ENCODE measurements at regions of chr2 and their contacts with region 1.

Region 1: GRCh38 chr2:185608799-185609198 is 129.8 kb upstream of the FSIP2 start:
- DNase-seq: no peak
- ATAC-seq: no peak
- H3K4me3 ChIP-seq: no peak overlapping the region
- H3K27ac ChIP-seq: no peak overlapping the region
- H3K4me1 ChIP-seq: no peaks in the 10 kb centered on the region
- H3K27me3 ChIP-seq: no peaks in the 10 kb centered on the region
- CTCF ChIP-seq: peak in 2 of 9 donors; percentile 12 to 19

Region 2: GRCh38 chr2:185644828-185645227 is 36.0 kb after region 1 on chr2:
- intact Hi-C with region 1: loop called in 1 of 10 experiments (anchors 5 kb)
- DNase-seq: no peak
- ATAC-seq: no peak
- H3K4me3 ChIP-seq: no peak overlapping the region
- H3K27ac ChIP-seq: no peak overlapping the region
- H3K4me1 ChIP-seq: no peaks in the 10 kb centered on the region
- H3K27me3 ChIP-seq: no peaks in the 10 kb centered on the region
- CTCF ChIP-seq: no peak

Region 3: GRCh38 chr2:186256540-186256939 is 647.7 kb after region 1 on chr2:
- intact Hi-C with region 1: loop called in 1 of 10 experiments (anchors 10 kb)
- DNase-seq: no peak
- ATAC-seq: peak in 1 of 8 donors; percentile 50
- H3K4me3 ChIP-seq: no peak overlapping the region
- H3K27ac ChIP-seq: no peak overlapping the region
- H3K4me1 ChIP-seq: peaks cover 0 to 3% (median 0%) of the 10 kb centered on the region in 9 donors
- H3K27me3 ChIP-seq: no peaks in the 10 kb centered on the region
- CTCF ChIP-seq: peak in 7 of 9 donors; percentile 43 to 67 (median 65)

Measured in heart right ventricle (tissue), 16 donors.